Activated T-helper 2 cell treated with anti-CD3 and anti-CD28 coated beads, Interferon-gamma antibody, Interleukin-2, Interleukin-4, amounts not matched to agents 10 μg/mL and 5 μg/mL and 100 μg/mL, durations not matched to agents 14 hours and 24 hours and 36 hours (primary cell): ENCODE measurements at regions of chr9 and their contacts with region 1.

Region 1: DNA sequence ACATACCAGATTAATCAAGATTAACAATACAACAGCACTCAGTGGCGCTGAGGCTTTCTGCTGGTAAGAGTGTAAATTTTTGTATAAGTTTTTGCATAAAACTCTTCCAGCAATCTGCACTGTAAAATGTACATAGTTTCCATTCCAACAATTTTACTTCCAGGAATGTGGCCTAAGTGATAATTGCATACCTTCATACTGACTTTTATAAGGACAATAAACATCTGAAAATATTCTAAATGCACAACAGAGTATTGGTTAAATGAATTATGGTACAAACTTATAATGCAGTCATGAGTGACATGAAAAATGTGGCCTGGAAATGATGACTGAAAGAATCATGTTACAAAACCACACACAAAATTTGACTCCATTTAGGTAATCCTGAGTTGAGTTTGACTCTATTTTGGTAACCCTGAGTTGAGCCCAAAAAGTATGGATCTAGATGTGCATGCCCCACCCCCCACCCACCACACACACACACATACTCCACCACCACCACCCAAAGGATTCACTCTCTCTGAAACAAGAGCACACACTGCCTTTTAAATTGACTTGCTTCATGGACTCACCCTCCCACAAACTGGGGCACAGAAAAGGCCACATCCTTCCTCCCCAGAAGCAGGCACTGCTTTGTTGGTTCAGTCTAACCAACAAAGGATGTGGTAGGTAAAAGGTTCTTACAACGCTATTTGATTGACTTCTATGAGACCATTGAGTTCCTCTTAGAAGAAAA is 137.6 kb downstream of the SUSD1 start:
- DNase-seq: peak; percentile 70
- H3K4me3 Mint-ChIP-seq: no peak overlapping the region
- H3K27ac Mint-ChIP-seq: peak overlapping the region; percentile 76
- H3K4me1 Mint-ChIP-seq: peaks cover 36% of the 10 kb centered on the region
- H3K27me3 Mint-ChIP-seq: peaks cover 33% of the 10 kb centered on the region

Region 2: GRCh38 chr9:111896353-111896958 is 141.0 kb before region 1 on chr9 and contains the start of gene UGCG:
- intact Hi-C with region 1: loop called (anchors 1 kb)
- DNase-seq: peak; percentile 85
- H3K4me3 Mint-ChIP-seq: peak within 1 kb of the TSS; percentile 84
- H3K27ac Mint-ChIP-seq: peak within 1 kb of the TSS; percentile 83
- H3K4me1 Mint-ChIP-seq: peaks cover 9% of the 10 kb centered on the region
- H3K27me3 Mint-ChIP-seq: peaks cover 3% of the 10 kb centered on the region
- total RNA-seq, gene UGCG: 14.4 and 16.6 TPM in 2 replicates

Region 3: GRCh38 chr9:112012026-112012902 is 25.2 kb before region 1 on chr9:
- intact Hi-C with region 1: loop called (anchors 1 kb)
- DNase-seq: no peak
- H3K4me3 Mint-ChIP-seq: no peak overlapping the region
- H3K27ac Mint-ChIP-seq: no peak overlapping the region
- H3K4me1 Mint-ChIP-seq: peaks cover 22% of the 10 kb centered on the region
- H3K27me3 Mint-ChIP-seq: peaks cover 49% of the 10 kb centered on the region

Region 4: DNA sequence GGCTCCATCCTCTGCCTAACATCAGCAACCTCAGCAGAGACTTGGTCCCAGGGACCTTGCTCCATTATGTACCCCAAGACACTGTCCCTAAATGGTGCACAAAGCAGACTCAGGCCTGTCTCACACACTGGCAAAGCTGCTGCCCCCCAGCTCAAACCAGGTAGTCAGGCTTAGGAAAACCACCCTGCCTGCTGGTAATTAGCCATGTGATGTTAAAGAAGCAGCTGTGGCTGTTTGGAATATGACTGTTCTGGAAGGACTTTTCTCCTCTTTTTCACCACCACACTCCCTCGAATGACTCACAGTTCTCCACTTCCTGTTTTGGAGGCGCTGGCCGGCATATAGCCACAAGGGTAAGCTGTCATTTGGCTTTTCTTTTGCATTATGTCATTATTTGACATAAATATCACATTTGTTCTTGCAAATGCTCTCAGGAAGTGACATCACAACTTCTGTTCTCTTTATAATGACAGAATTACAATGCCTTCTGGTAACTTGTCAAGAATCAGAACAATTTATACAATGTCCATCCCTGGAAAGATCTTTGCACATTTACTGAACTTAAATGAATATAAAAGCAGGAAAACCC is 23.8 kb after region 1 on chr9:
- intact Hi-C with region 1: loop called (anchors 2 kb)
- DNase-seq: peak; percentile 18
- H3K4me3 Mint-ChIP-seq: no peak overlapping the region
- H3K27ac Mint-ChIP-seq: no peak overlapping the region
- H3K4me1 Mint-ChIP-seq: peaks cover 17% of the 10 kb centered on the region
- H3K27me3 Mint-ChIP-seq: no peaks in the 10 kb centered on the region